ENCODE measurements at regions of chr3 and their contacts with region 1.

Region 1: GRCh38 chr3:111539351-111540331 is 2.4 kb upstream of the CD96 start:
- DNase-seq: no peak
- CTCF ChIP-seq: peak; percentile 57

Region 2: GRCh38 chr3:109731620-109732473 is 1807.8 kb before region 1 on chr3:
- in situ Hi-C with region 1: loop called (anchors 25 kb)
- DNase-seq: peak; percentile 9
- CTCF ChIP-seq: peak; percentile 49

Measured in GM13976 (cell line).